Activated CD4-positive, alpha-beta memory T cell treated with anti-CD3 and anti-CD28 coated beads for 36 hours (primary cell): ENCODE measurements at regions of chr2 and their contacts with region 1.

Region 1: GRCh38 chr2:61470965-61471904 is at the start of gene USP34:
- DNase-seq: peak; percentile 95
- H3K4me3 Mint-ChIP-seq: peak within 1 kb of the TSS; percentile 93
- H3K27ac Mint-ChIP-seq: peak within 1 kb of the TSS; percentile 94
- H3K4me1 Mint-ChIP-seq: peaks cover 27% of the 10 kb centered on the region
- H3K27me3 Mint-ChIP-seq: no peaks in the 10 kb centered on the region
- total RNA-seq, gene USP34: 61.1 to 69.4 TPM

Region 2: DNA sequence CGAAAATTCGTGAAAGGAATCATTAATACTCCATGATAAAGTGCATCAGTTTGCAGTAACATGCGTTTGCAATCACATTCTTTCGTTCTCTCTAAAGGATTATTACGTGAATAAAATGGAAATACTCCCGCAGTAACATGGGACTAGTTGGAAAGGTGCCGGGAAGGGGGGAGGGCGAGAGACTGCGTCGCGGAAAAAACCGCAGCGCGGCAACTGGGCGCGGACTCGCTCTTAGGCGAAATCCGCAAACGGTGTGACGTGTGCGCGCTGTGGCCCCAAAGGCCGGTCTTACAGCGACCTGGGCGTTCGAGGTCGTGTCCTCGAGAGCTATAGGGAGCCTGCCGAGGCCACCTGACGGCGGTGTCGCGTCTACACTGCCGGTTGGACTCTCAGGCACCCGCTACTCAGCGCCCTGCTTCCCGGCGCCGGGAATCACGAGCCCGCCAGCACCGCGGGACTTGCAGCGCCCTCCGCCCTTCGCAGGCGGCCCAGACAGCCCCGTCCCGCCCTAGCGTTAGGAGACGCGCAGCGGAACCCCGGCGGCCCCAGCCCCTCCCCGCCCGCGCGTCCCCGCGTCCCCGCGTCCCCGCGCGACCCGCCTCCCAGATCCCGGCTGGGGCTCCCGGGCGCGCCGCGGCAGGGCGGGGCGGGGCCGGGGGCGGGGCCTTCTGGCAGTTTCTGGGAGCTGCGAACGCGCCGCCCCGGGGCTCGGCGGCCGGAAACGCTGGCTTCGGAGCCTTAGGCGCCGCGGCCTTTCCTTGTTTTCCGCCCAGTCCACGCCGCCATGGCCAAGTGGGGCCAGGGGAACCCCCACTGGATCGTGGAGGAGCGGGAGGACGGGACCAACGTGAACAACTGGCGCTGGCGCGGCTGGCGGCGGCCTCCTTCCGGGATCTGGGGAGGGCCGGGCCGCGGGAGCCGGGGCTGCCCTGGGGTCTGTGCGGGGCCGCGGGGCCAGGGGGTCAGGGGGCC is 294.2 kb before region 1 on chr2:
- CTCF ChIA-PET with region 1: no interaction called
- POLR2A ChIA-PET with region 1: no interaction called
- intact Hi-C with region 1: loop called (anchors 1 kb)
- DNase-seq: peak; percentile 95
- H3K4me3 Mint-ChIP-seq: peak overlapping the region; percentile 89
- H3K27ac Mint-ChIP-seq: peak overlapping the region; percentile 94
- H3K4me1 Mint-ChIP-seq: peaks cover 47% of the 10 kb centered on the region
- H3K27me3 Mint-ChIP-seq: no peaks in the 10 kb centered on the region

Region 3: DNA sequence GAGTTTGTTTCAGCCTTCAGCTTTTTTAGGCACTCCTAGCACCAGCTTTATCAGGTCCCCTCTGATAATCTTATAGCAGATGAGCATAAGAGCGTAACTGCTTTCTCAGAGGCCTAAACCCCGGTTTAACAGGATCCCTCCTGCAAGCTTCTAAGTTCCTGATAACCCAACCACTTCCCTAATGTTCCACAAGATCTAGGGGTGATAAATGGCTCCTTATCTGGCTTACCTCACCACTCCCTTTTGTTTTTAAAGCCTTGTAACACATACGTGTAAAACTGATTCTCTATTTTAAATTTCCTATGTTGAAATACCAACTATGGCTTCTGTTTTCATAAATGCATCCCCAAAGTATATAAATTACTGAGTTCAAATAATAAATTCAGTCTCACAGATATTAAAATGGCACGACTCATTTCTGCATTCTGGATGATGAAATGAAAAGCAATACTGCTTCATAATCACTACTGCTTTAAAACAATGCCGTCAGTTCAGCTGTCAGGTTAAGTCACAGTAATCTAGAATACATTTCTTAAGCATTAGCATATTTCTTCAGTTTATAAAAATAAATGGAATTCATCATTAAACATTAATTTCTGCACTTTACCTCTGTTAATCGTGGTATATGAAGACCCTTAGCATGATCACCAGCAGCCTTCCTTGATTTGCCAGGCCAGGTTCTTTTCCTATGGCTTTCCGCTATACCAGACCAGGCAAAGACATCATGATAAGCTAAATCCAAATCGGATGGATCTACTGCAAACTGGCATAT is 183.0 kb before region 1 on chr2:
- CTCF ChIA-PET with region 1: no interaction called
- POLR2A ChIA-PET with region 1: no interaction called
- intact Hi-C with region 1: no loop called
- DNase-seq: no peak
- H3K4me3 Mint-ChIP-seq: no peak overlapping the region
- H3K27ac Mint-ChIP-seq: no peak overlapping the region
- H3K4me1 Mint-ChIP-seq: peaks cover 8% of the 10 kb centered on the region
- H3K27me3 Mint-ChIP-seq: no peaks in the 10 kb centered on the region

Region 4: DNA sequence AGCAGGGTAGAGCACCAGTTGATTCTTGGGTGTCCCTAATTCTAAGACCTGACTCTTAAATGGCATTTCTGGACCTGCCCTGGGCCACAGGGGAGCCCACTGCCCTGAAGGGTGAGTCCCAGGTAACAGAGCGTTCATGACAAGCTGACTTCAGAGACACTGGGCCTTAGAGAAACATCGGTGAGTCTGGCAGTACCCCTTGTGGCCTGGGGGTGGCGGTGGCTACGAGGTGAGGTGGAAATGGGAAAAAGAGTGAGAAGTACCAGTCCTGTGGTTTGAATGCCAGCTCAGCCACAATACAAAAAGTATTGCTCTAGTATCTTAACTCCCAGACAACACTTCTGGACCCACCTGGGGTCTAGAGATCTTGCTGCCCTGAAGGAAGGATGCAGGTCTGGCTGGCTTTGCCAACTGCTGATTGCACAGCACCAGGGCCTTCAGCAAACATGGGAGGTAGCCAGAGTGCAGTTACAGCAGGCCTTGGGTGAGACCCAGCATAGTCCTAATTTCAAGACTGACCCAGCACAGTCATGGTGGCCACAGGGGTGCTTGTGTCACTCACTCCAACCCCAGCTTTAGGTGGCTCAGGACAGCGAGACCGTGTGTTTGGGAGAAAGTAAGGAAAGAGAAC is 44.9 kb before region 1 on chr2:
- CTCF ChIA-PET with region 1: interaction called, 11 read pairs
- POLR2A ChIA-PET with region 1: interaction called, 5 read pairs
- intact Hi-C with region 1: loop called (anchors 1 kb)
- DNase-seq: peak; percentile 84
- H3K4me3 Mint-ChIP-seq: no peak overlapping the region
- H3K27ac Mint-ChIP-seq: peak overlapping the region; percentile 64
- H3K4me1 Mint-ChIP-seq: peaks cover 57% of the 10 kb centered on the region
- H3K27me3 Mint-ChIP-seq: no peaks in the 10 kb centered on the region

Region 5: DNA sequence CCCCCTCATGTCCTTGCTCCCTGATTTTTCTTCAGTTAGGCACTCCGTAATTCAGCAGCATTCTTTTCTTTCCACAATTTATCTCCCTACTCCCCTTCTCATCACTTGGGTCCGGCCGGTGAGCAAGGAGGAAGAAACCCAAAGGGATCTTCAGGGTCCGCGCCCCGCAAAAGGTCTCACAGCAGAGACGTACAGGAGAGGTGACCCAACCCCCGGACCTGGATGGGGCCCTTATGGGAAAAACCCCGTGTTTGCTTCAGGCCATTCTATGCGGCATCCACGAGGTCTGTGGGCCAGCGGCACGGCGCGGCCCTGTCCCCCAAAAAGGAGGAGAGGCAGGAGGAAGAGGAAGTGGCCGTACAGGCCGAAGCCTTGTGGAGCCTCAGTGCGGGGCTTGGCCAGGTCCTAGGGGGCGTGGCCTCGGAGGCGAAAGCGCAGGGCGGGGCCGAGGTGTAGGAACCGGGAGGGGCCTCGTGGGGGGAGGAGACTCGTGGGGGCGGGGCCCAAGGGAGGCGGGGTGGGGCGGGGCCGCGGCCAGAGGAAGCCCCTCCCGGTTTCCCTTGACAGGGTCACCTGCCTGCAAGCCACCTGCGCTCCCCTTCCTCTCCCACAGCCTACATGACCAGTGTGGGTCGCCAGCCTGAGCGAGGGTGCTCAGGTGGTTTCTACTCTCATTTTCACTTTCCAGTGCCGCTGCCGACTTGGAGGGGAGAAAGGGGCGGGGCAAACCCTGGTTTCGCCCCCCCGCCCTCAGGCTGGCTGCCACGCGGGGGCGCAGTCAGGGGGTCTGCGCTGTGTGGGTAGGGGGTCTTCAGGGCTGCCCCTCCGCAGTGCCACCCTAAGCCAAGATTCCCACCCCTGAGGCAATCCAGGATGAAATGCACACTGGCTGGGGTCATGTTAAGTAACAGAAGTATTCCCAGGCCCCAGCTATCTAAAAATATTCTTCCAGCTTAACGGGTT is 223.4 kb after region 1 on chr2:
- CTCF ChIA-PET with region 1: no interaction called
- POLR2A ChIA-PET with region 1: no interaction called
- intact Hi-C with region 1: loop called (anchors 5 kb)
- DNase-seq: peak; percentile 90
- H3K4me3 Mint-ChIP-seq: peak overlapping the region; percentile 79
- H3K27ac Mint-ChIP-seq: peak overlapping the region; percentile 64
- H3K4me1 Mint-ChIP-seq: peaks cover 11% of the 10 kb centered on the region
- H3K27me3 Mint-ChIP-seq: no peaks in the 10 kb centered on the region

Region 6: DNA sequence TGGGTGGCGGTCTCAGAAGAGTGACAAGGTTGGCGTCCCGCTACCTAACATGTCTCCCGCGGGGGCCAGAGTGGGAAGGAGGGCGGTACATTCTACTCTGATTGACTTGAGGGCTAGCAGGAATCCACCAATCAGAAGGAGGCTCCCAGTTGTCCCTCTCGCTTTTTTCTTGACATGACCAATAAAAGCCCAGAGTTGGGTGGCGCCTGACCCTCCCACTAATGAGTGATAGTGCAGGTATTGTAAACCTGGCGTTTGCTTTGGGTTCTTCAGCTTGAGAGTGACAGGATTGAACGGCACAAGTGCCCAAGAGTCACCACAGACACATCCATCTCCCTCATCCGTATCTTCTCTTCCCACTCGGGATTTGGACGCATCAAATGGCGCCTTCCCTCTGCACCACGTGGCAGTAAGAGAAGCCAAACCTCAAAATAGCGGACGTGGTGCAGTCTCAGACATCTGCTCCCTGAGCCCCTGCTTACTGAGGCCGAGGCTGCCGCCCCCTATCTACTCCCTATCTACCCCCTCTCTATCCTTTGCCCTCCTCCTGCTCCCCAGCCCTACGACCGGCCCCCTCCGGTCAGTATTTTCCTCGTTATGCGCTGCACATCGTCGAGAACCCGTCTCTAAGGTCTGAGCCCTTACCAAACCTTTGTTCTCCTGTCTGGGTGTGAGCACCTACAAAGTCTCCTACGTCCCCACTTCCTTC is 383.4 kb after region 1 on chr2:
- CTCF ChIA-PET with region 1: no interaction called
- POLR2A ChIA-PET with region 1: no interaction called
- intact Hi-C with region 1: loop called (anchors 2 kb)
- DNase-seq: peak; percentile 93
- H3K4me3 Mint-ChIP-seq: peak overlapping the region; percentile 91
- H3K27ac Mint-ChIP-seq: peak overlapping the region; percentile 90
- H3K4me1 Mint-ChIP-seq: peaks cover 19% of the 10 kb centered on the region
- H3K27me3 Mint-ChIP-seq: no peaks in the 10 kb centered on the region

Region 7: GRCh38 chr2:62705007-62705829 is 1234.0 kb after region 1 on chr2 and contains the start of gene EHBP1:
- CTCF ChIA-PET with region 1: no interaction called
- POLR2A ChIA-PET with region 1: no interaction called
- intact Hi-C with region 1: loop called (anchors 5 kb)
- DNase-seq: peak; percentile 98
- H3K4me3 Mint-ChIP-seq: peak within 1 kb of the TSS; percentile 76
- H3K27ac Mint-ChIP-seq: peak within 1 kb of the TSS; percentile 74
- H3K4me1 Mint-ChIP-seq: peaks cover 28% of the 10 kb centered on the region
- H3K27me3 Mint-ChIP-seq: no peaks in the 10 kb centered on the region
- total RNA-seq, gene EHBP1: 23.5 to 23.6 TPM